Caco-2 (cell line): ENCODE measurements at regions of chr1 and their contacts with region 1.

Region 1: DNA sequence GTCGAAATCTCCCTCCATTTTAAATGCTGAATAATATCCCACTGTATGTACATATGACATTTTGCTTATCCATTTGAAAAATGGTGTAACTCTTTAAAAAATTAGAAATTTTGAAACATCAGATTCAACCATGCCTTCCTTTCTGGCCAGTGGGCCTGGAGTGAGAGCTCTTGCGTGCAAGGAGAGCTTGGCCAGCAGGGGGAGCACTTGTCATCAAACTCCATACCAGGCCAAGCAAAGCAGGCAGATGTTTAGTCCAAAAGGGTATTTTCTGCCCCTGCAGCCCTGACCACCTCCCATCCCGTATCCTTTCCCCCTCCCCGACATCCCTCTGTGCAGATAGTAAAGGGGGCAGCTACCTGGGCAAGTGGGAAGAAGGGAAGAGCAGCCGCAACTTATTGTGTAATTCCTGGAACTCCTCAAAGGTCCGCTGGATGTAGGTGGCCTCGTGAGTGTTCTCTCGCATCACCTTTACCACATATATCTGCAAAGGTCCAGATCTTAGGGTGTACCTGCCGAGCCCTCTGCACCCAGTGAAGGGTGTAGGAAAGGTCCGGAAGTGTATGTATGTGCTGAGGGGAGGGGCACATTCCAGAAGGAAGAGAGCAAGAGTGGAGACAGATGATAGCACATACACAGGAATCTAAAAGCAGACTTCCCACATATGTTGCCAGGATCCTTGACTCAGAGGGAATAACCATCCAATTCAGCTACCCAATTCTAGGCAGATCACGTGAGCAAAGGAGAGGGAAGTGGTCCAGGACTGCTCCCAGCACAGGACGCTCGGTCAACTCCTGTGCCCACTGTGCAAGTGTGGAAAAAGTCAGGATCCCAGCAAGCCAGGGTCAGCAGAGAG is 19.9 kb upstream of the PPP1R15B start:
- DNase-seq: peak; percentile 75 to 80
- H3K4me3 ChIP-seq: no peak overlapping the region
- H3K4me3 Mint-ChIP-seq: no peak overlapping the region
- H3K27ac Mint-ChIP-seq: peak overlapping the region; percentile 4
- H3K4me1 ChIP-seq: peaks cover 5% of the 10 kb centered on the region; the same call in 1 of the 2 replicates
- H3K4me1 Mint-ChIP-seq: peaks cover 7% of the 10 kb centered on the region
- H3K27me3 ChIP-seq: no peaks in the 10 kb centered on the region
- H3K27me3 Mint-ChIP-seq: no peaks in the 10 kb centered on the region
- CTCF ChIP-seq: peak; percentile 94 to 97

Region 2: GRCh38 chr1:204398217-204399081 is 33.1 kb before region 1 on chr1:
- CTCF ChIA-PET with region 1: no interaction called
- POLR2A ChIA-PET with region 1: no interaction called
- intact Hi-C with region 1: no loop called
- DNase-seq: peak; percentile 88 to 91
- H3K4me3 ChIP-seq: no peak overlapping the region
- H3K4me3 Mint-ChIP-seq: no peak overlapping the region
- H3K27ac Mint-ChIP-seq: no peak overlapping the region
- H3K4me1 ChIP-seq: no peaks in the 10 kb centered on the region
- H3K4me1 Mint-ChIP-seq: peaks cover 10% of the 10 kb centered on the region
- H3K27me3 ChIP-seq: no peaks in the 10 kb centered on the region
- H3K27me3 Mint-ChIP-seq: no peaks in the 10 kb centered on the region
- CTCF ChIP-seq: peak; percentile 82 to 90

Region 3: GRCh38 chr1:204446370-204447111 is 15.0 kb after region 1 on chr1:
- CTCF ChIA-PET with region 1: interaction called, 10 read pairs
- POLR2A ChIA-PET with region 1: no interaction called
- intact Hi-C with region 1: no loop called
- DNase-seq: peak; percentile 75 to 81
- H3K4me3 ChIP-seq: no peak overlapping the region
- H3K4me3 Mint-ChIP-seq: no peak overlapping the region
- H3K27ac Mint-ChIP-seq: peak overlapping the region; percentile 52
- H3K4me1 ChIP-seq: peaks cover 26% of the 10 kb centered on the region
- H3K4me1 Mint-ChIP-seq: peaks cover 13% of the 10 kb centered on the region
- H3K27me3 ChIP-seq: no peaks in the 10 kb centered on the region
- H3K27me3 Mint-ChIP-seq: no peaks in the 10 kb centered on the region
- CTCF ChIP-seq: peak; percentile 74 to 90